Activated naive CD4-positive, alpha-beta T cell treated with anti-CD3 and anti-CD28 coated beads for 36 hours (primary cell): ENCODE measurements at regions of chr12 and their contacts with region 1.

Region 1: DNA sequence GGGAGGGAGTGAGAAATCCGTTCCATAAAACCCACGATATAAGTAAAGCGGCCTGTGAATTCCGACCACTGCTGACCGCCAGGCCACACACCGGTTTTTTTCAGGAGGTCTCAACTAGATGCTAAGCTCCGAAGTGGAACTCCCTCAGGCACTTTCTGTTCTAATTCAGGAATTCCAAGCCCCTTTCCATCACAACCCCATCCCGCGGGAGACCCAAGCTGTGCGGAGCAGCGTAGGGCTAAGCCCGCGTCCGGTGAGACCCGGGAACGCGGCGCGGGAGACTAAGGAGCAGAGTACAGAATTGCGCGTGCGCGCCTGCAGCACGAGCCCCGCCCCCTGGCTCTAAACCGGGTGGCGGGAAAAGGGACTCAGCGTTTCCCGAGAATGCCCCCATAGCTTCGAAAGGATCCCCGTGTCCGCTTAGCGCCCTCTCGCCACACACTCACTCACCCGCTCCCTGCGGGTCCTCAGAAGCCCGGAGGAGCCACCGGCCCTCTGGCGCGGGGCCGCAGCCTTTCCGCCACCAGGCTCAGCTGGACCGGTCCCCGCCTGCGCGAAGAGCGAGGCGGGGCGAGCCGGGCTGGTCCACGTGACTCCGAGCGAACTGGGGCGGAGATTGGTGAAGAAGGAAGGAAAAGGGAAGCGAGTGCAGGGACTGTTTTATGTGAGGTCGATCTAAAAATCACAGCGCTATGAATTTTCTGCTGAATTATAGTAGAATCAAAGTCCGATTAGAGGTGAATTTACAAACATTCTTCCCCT is at the start of gene TIMELESS:
- DNase-seq: peak; percentile 90
- H3K4me3 Mint-ChIP-seq: peak within 1 kb of the TSS; percentile 89
- H3K27ac Mint-ChIP-seq: peak within 1 kb of the TSS; percentile 96
- H3K4me1 Mint-ChIP-seq: peaks cover 16% of the 10 kb centered on the region
- H3K27me3 Mint-ChIP-seq: no peaks in the 10 kb centered on the region
- total RNA-seq, gene TIMELESS: 69.9 to 70.8 TPM

Region 2: DNA sequence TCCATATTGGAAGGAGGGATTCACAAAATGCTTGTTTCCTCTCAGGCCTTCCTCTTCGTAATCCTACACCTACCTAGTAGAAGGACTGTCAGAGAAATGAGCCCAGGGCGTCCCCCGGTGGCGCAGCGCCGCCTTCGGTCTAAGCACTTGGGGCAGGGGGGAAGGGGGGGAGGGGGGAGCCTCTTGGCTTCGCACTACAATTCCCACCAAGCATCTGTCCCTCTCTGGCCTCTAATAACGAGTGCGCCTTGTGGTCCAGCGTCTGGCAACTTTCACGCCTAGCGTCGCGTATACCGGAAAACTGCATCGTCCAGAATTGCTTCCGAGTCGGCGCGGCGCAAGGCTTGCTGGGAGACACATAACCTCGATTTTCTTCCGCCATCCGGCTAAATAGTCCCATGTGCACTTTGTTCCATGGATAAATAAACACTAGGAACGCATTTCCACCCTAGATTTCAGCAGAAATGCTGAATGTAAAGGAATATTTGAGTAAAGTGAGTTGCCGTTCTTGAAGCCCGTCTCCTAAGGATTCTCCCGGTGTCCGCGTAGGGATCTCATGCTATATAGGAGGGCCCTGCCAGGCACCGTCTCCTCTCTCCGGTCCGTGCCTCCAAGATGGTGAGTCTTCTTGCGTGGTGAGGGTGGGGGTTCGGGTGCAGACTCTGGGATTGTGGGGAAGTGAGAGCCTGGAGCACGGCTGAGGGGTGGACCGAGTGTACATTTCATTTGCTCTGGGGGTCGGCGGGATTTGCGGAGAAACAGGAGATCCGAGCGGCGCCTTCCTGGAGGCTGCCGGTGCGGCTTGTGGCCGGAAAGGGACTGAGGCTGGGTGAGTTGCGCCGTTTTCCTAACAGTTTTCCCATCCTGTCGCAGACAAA is 407.2 kb before region 1 on chr12 and contains the start of gene RPS26:
- CTCF ChIA-PET with region 1: no interaction called
- intact Hi-C with region 1: loop called (anchors 2 kb)
- DNase-seq: peak; percentile 96
- H3K4me3 Mint-ChIP-seq: peak within 1 kb of the TSS; percentile 96
- H3K27ac Mint-ChIP-seq: peak within 1 kb of the TSS; percentile 98
- H3K4me1 Mint-ChIP-seq: peaks cover 57% of the 10 kb centered on the region
- H3K27me3 Mint-ChIP-seq: no peaks in the 10 kb centered on the region
- total RNA-seq, gene RPS26: 31.0 to 37.3 TPM

Region 3: DNA sequence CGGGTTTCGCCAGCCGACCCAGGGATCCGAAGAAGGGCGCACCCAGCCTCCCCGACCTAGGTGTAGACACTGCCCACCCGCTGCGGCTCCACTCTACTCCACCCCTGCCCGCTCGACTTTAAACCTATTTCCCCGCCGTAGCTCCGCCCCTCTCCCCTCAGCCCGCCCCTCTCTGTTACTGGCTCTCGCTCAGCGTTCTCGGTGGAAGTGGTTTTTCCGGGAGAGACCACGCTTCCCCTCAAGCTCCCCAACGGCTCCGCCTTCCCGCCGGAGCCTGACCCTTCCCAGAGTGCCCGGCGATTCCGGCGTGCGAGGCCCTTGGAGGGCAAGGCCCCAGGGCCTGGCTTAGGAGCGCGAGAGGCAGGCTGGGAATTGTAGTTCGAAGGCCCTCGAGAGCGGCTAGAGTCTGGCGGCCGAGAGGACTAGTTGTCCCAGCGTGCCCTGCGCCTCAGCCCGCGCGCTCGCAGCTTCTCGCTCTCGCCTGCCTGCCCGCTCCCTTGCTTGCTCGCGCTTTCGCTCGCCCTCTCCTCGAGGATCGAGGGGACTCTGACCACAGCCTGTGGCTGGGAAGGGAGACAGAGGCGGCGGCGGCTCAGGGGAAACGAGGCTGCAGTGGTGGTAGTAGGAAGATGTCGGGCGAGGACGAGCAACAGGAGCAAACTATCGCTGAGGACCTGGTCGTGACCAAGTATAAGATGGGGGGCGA is 344.8 kb before region 1 on chr12 and contains the start of gene PA2G4:
- CTCF ChIA-PET with region 1: no interaction called
- intact Hi-C with region 1: no loop called
- DNase-seq: peak; percentile 99
- H3K4me3 Mint-ChIP-seq: peak within 1 kb of the TSS; percentile 99
- H3K27ac Mint-ChIP-seq: peak within 1 kb of the TSS; percentile 99
- H3K4me1 Mint-ChIP-seq: peaks cover 38% of the 10 kb centered on the region
- H3K27me3 Mint-ChIP-seq: no peaks in the 10 kb centered on the region
- total RNA-seq, gene PA2G4: 398 to 411 TPM

Region 4: GRCh38 chr12:56189176-56189917 is 259.7 kb before region 1 on chr12 and contains the start of gene SMARCC2:
- CTCF ChIA-PET with region 1: no interaction called
- intact Hi-C with region 1: loop called (anchors 5 kb)
- DNase-seq: peak; percentile 93
- H3K4me3 Mint-ChIP-seq: peak within 1 kb of the TSS; percentile 95
- H3K27ac Mint-ChIP-seq: peak within 1 kb of the TSS; percentile 92
- H3K4me1 Mint-ChIP-seq: peaks cover 33% of the 10 kb centered on the region
- H3K27me3 Mint-ChIP-seq: no peaks in the 10 kb centered on the region
- total RNA-seq, gene SMARCC2: 75.8 to 79.0 TPM

Region 5: GRCh38 chr12:56315622-56316473 is 133.2 kb before region 1 on chr12 and contains the start of gene CNPY2:
- CTCF ChIA-PET with region 1: no interaction called
- intact Hi-C with region 1: loop called (anchors 5 kb)
- DNase-seq: peak; percentile 92
- H3K4me3 Mint-ChIP-seq: peak within 1 kb of the TSS; percentile 97
- H3K27ac Mint-ChIP-seq: peak within 1 kb of the TSS; percentile 97
- H3K4me1 Mint-ChIP-seq: peaks cover 16% of the 10 kb centered on the region
- H3K27me3 Mint-ChIP-seq: no peaks in the 10 kb centered on the region
- total RNA-seq, gene CNPY2: 47.5 to 57.3 TPM

Region 6: DNA sequence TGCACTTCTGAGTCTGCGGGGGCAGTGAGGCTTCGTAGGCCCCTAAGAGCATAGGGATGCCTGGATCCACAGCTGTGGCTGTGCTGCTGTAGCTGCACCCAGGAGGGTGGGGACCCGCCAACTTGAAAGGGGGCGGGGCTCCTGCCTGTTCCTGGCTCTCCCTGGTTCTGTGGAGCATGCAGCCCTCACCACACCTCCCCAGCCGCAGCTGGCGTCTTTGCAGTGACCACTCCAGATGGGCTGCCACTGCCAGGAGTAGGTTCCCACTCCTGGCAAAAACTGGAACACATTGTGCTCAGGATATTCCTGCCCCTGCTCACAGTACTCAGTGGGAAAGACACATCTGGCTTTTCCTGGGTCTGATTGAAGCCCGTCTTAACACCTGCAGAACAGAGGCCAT is 35.6 kb before region 1 on chr12:
- CTCF ChIA-PET with region 1: no interaction called
- intact Hi-C with region 1: no loop called
- DNase-seq: no peak
- H3K4me3 Mint-ChIP-seq: no peak overlapping the region
- H3K27ac Mint-ChIP-seq: no peak overlapping the region
- H3K4me1 Mint-ChIP-seq: no peaks in the 10 kb centered on the region
- H3K27me3 Mint-ChIP-seq: no peaks in the 10 kb centered on the region

Region 7: DNA sequence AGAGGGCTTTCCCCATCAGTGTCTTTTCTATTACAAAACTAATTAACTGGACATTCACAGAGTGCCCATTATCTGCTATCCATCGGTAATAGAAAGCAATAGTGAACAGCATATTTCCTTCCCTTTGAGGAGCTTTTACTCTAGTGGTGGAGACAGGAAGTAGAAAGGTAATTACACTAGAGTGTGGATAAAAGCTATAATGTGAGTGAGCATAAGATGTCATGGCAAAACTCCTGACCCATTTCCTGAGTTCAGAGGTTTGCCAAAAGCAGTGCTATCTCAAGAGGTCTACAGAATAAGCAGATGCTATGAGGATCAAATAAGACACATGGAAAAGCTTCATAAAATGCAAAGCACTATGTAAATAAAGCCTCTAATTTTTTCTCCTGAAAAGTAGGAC is 23.8 kb before region 1 on chr12:
- CTCF ChIA-PET with region 1: interaction called, 11 read pairs
- intact Hi-C with region 1: no loop called
- DNase-seq: no peak
- H3K4me3 Mint-ChIP-seq: no peak overlapping the region
- H3K27ac Mint-ChIP-seq: peak overlapping the region; percentile 6
- H3K4me1 Mint-ChIP-seq: peaks cover 12% of the 10 kb centered on the region
- H3K27me3 Mint-ChIP-seq: no peaks in the 10 kb centered on the region

Region 8: DNA sequence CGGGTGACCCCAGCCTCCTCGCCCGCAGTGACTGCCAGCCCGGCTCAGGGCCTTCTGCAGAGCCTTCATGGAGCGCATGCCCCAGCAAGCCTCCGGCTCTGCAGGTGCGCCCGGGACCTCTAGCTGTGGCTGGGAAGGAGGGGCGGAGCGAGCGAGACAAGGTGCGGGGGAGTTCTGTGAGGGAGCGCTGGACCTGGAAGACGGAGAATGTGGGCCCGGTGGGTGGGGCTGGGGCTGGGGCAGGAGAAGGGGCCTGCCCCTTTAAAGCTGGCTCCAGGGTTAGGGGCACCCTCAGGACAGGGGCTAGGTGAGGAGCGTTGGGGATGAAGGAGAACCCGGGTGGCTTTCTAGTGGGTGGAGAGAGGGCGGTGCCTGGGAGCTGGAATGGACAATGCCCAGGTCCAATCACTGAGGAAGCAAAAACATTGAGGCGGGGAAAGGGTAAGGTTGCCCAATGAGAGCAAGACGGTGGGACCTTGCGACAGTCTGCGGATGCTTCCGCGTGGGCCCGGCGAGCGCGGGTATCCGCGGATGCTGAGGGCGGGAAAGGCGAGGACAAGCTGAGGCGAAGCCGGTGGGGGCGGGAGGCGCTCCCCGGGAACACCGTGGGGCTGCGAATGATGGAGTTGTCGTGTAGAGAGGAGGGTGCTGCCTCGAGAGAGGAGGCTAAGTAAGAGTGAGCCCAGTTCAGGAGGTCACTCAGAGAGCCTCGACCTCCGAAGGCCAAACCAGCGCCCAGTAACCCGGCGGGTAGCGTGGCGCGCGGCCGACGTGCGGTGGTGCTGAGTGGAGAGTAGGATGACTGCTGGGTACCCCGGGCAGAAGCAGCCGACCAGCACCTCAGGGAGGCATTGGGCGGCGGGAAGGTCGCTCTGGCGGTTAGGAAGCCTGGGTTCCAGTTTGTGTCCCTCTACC is 39.3 kb after region 1 on chr12 and contains the start of gene GLS2:
- CTCF ChIA-PET with region 1: no interaction called
- intact Hi-C with region 1: loop called (anchors 1 kb)
- DNase-seq: peak; percentile 79
- H3K4me3 Mint-ChIP-seq: peak within 1 kb of the TSS; percentile 84
- H3K27ac Mint-ChIP-seq: no peak within 1 kb of the TSS
- H3K4me1 Mint-ChIP-seq: peaks cover 16% of the 10 kb centered on the region
- H3K27me3 Mint-ChIP-seq: peaks cover 19% of the 10 kb centered on the region
- total RNA-seq, gene GLS2: 4.6 to 5.5 TPM